GM10248 (cell line): ENCODE measurements at regions of chr4 and their contacts with region 1.

Region 1: DNA sequence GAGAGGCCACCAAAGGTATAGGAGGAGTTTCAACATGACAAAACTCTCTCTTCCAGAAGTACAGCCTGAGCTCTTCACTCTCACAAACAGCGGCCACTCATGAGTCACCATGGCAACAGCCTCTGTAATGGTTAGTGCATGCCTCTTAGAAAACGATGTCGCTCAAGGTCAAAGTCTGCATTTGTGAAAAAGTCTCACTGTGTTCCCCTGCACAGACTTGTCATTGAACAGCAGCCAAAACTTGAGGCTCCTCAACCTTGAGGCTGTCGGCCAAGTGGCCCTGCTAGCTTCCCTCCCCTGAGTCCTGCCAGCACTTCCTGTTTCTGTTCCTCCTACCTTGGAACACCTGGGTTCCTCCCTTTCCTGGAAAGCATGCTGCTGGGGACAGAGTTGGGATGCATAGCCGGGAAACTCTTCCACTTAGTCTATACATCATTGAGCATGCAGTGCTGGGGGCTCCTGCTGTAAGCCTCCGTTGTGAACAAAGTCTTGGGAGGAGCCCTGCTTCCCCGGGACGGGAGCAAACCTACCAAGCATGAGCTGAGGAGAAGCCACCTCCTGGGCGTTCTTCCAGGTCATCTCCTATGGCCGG is 66.6 kb downstream of the ING2 start:
- DNase-seq: no peak
- CTCF ChIP-seq: no peak

Region 2: DNA sequence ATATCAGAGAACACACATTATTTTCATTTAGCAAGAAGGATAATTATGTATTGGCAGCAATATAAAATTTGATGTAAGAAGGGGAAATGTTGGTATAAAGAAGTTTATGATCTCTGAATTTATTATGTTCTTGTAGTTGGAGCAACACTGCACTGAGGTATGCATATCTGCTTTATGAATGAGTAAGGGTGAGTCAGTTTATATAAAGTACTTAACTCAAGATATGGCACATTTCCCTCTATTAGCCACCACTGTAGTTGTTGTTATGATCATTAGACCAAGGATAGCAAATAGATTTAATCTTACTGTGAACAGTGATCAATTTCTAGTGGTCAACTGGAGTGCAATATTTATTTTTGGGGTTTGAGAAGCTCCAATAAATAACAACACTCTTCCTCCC is 1704.6 kb after region 1 on chr4:
- CTCF ChIA-PET with region 1: no interaction called
- POLR2A ChIA-PET with region 1: interaction called, 10 read pairs
- DNase-seq: no peak
- CTCF ChIP-seq: no peak